GM10248 (cell line): ENCODE measurements at regions of chr13 and their contacts with region 1.

Region 1: GRCh38 chr13:43085545-43085944 is 62.2 kb downstream of the DNAJC15 start:
- DNase-seq: no peak
- CTCF ChIP-seq: peak; percentile 26

Region 2: GRCh38 chr13:42524487-42525034 is 561.0 kb before region 1 on chr13:
- CTCF ChIA-PET with region 1: no interaction called
- POLR2A ChIA-PET with region 1: no interaction called
- DNase-seq: peak; percentile 34
- CTCF ChIP-seq: no peak

Region 3: DNA sequence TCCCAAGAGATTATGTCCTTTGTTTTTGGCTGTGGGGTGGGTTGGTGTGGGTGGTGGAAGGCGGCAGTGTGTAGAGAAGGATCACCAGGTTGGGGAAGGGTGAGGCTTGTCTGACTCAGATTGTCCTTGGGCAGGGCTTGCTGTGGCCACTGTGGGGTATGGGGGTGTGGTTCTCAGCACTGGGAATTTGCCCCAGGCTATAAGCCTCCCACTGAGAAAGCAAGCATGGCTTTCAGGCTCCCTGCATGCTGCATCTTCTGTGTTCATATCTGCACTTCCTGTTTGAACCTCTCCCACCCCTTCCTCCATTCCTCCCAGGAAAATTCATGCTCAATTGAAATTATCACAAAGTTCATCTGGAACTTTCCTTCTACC is 27.2 kb before region 1 on chr13:
- CTCF ChIA-PET with region 1: interaction called, 13 read pairs
- POLR2A ChIA-PET with region 1: no interaction called
- DNase-seq: no peak
- CTCF ChIP-seq: no peak

Region 4: GRCh38 chr13:43074824-43075510 is 10.6 kb before region 1 on chr13:
- CTCF ChIA-PET with region 1: interaction called, 24 read pairs
- POLR2A ChIA-PET with region 1: no interaction called
- DNase-seq: no peak
- CTCF ChIP-seq: no peak

Region 5: GRCh38 chr13:43100667-43101066 is 15.1 kb after region 1 on chr13:
- CTCF ChIA-PET with region 1: interaction called, 22 read pairs
- POLR2A ChIA-PET with region 1: no interaction called
- DNase-seq: no peak
- CTCF ChIP-seq: no peak

Region 6: DNA sequence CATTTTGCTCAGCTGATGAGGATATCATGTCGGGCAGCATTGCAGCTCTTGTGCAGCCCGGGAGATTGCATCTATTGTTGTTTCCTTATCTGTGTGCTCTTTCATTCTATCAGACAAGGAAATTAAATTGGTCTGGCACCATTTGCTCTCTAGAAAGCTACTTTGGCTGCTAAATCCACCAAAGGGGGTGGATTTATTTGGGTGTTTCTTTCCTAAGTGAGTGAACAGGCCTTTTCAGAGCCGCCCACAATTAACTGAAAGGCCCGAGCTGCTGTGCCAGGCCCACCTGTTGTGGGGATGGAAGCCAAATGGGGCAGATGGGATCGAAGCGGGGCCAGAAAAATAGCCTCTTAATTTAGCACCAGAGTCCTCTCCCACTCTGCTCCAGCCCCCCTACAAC is 37.2 kb after region 1 on chr13:
- CTCF ChIA-PET with region 1: no interaction called
- POLR2A ChIA-PET with region 1: no interaction called
- DNase-seq: no peak
- CTCF ChIP-seq: no peak